AG04450 (cell line): ENCODE measurements at regions of chr12 and their contacts with region 1.

Region 1: DNA sequence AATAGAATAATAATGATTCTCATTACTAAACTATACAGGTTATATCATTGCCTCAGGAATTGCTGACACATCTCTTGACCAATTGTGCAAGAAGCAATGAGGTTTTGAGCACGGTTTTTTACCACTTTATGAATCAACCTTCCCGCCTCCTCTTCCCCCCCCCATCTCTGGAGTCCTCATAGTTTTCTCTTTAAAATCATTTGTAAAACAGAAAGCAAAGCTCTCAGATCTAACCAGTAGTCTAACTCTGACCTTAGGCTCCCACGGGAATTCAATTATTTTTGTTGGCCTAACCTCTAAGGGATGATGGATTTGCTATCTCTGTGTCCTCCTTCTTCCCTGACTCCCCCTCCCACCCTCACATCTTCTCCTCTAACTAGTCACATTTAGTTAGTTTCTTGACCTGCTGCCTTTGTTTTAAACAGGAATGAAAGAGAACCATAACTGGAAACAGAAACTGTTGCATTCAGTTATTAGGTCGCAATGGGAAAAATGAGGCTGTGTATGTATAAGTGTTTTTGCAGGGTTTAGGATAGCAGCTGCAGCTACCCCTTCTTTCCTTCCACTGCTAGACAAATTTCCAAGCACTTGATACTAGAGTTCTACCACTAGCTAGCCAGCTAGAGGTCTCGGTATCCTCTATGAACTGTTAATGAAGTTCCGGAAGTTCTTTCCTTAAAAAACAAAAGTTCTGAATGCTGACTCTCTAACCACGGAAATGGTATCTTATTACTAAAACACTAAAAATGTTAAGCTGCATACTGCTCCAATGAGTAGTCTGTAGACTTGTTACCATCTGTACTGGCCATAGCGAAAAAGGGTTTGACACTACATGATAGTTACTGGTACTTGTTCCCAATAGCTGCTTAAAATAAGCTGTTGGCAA is 65.4 kb downstream of the TAOK3 start:
- DNase-seq: peak; percentile 80
- H3K4me3 ChIP-seq: peak overlapping the region; percentile 53
- H3K27ac ChIP-seq: peak overlapping the region; percentile 99
- H3K27me3 ChIP-seq: no peaks in the 10 kb centered on the region
- CTCF ChIP-seq: no peak

Region 2: DNA sequence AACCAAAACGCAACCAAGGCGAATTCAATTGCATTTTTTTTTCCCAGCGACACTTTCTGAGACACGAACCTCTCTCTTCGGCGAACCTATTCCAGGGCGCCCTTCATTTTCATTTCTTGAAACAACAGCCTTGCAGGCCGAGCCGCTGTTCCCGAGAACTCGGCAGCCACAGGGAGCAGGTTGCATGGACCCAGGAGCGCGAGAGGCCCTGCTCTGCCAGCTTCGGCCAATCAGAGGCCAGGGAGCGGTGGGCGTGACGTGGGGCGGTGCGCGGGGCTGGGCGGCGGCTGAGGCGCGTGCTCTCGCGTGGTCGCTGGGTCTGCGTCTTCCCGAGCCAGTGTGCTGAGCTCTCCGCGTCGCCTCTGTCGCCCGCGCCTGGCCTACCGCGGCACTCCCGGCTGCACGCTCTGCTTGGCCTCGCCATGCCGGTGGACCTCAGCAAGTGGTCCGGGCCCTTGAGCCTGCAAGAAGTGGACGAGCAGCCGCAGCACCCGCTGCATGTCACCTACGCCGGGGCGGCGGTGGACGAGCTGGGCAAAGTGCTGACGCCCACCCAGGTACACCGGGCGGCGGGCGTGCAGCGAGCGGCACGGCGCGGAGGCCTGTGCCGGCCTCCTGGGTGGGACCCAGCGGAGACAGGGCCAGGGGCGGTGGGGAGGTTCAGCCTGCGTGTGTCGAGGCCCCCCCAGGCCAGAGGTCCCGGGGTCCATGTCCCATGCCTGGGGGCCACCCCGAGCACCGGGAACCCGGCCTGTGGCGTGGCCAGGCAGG is 171.3 kb before region 1 on chr12 and contains the start of gene PEBP1:
- CTCF ChIA-PET with region 1: no interaction called
- POLR2A ChIA-PET with region 1: interaction called, 16 read pairs
- DNase-seq: peak; percentile 38
- H3K4me3 ChIP-seq: peak within 1 kb of the TSS; percentile 89
- H3K27ac ChIP-seq: peak within 1 kb of the TSS; percentile 47
- H3K27me3 ChIP-seq: no peaks in the 10 kb centered on the region
- CTCF ChIP-seq: no peak
- polyA plus RNA-seq, gene PEBP1: 149 and 151 TPM in 2 replicates

Region 3: GRCh38 chr12:118734266-118734665 is 427.0 kb after region 1 on chr12:
- CTCF ChIA-PET with region 1: no interaction called
- POLR2A ChIA-PET with region 1: no interaction called
- DNase-seq: no peak
- H3K4me3 ChIP-seq: no peak overlapping the region
- H3K27ac ChIP-seq: no peak overlapping the region
- H3K27me3 ChIP-seq: no peaks in the 10 kb centered on the region
- CTCF ChIP-seq: no peak